Gastrocnemius medialis (tissue), 4 donors: ENCODE measurements at regions of chr18 and their contacts with region 1.

Region 1: DNA sequence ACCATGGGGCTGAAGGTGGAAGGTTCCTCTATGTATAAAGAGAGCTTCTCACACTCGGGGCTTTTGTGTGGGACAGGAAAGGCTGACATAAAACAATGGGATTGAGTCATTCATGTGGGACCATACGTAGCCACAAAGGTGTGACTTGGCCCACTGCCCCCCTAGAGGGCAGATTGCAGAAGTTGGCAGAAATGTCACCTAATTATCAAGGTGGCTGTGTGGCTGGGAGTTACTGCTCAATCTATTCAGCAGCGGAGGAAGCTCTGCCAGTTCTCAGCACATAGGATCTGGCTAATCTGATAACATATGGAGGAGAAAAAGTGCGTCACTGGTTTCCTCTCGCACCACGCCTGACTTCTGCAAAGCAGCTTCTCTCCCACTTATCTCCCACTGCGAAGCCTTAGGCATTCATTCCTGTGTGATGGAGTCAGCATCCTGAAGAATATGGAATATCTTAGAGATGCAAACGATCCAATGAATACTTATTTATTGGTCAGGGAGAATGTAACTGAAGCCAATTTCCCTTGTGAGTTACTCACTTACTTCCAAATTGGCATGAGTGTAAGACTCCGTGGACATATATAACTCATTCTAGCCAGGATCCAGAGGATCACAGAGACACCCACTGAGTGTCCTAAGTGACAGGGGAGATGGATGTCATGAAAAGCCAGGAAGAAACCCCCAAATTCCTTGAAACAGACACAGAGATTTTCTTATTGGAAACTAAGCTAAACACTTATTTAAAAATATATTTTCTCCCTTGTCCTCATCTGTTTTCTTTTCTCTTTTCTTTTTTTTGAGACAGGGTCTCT is 344.8 kb downstream of the TGIF1 start:
- DNase-seq: no peak
- ATAC-seq: peak; percentile 36
- H3K4me3 ChIP-seq: no peak overlapping the region
- H3K27ac ChIP-seq: no peak overlapping the region
- H3K4me1 ChIP-seq: no peaks in the 10 kb centered on the region
- H3K27me3 ChIP-seq: no peaks in the 10 kb centered on the region
- CTCF ChIP-seq: no peak
- POLR2A ChIP-seq: no peak

Region 2: DNA sequence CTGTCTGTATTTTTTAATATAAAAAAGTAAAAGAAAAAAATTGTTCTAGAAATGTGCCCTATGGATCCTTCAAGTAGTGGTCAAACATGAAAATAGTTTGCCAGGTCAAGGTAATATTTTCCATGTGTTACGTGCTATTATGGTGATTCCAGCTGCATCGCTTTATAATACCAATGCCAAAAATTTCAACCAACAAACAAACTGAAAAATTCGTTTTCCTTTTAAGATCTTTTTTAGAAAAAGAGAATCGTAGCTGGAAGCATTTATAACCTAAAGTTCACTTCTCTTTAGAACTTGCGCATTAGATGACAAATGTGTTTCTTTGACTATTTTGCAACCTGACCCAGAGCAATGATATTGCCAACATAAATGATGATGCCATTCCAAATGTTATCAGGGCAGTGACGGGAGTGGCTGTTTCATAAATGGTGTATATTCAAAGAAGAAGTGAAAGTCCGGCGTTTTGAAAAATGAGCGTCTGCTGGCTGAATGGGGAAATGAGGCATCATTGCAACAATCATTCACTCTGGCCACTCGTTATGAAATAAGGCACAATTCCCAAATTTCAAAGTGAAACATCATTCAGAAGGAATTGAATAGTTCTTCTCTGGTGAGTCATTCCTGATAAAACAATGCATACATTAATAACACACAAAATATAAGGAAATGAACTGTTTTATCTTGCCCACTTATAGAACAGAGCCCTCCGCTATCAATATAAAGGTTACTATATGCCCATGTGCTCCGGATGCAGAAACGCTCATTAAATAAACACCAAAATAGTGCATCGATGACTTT is 47.4 kb before region 1 on chr18:
- in situ Hi-C with region 1: no loop called
- intact Hi-C with region 1: no loop called
- DNase-seq: peak in 1 of 2 donors; percentile 17
- ATAC-seq: no peak
- H3K4me3 ChIP-seq: no peak overlapping the region
- H3K27ac ChIP-seq: no peak overlapping the region
- H3K4me1 ChIP-seq: no peaks in the 10 kb centered on the region
- H3K27me3 ChIP-seq: no peaks in the 10 kb centered on the region
- CTCF ChIP-seq: no peak
- POLR2A ChIP-seq: no peak

Region 3: DNA sequence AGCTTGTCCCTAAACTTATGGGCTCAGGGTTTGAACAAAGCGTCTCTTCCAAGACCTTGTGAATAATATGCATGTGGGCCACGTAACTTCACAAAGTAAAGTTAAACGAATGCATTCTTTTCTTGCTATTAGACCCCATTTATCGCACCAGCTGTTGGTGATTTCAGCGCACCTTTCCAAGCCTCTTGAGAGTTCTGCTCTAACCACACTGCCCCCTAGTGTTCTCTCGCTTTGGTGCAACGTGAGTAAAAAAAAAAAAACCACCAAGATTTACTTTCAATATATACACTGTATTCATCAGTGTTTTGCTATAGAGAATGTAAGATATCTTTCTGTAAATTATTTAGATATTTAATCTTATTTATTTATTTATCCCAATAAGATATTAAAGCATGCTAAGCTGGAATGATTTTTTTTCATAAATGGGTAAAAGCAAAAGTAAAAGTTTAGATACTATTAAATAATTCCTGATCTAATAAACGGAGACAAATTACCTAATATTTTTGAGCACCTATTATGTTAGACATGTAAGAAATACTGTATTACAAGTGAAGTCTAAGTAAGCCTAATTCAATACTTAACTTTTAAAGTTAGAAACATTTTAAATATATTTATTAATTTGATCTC is 200.8 kb after region 1 on chr18:
- in situ Hi-C with region 1: loop called in 1 of 4 experiments (anchors 25 kb)
- intact Hi-C with region 1: no loop called
- DNase-seq: no peak
- ATAC-seq: no peak
- H3K4me3 ChIP-seq: no peak overlapping the region
- H3K27ac ChIP-seq: no peak overlapping the region
- H3K4me1 ChIP-seq: no peaks in the 10 kb centered on the region
- H3K27me3 ChIP-seq: no peaks in the 10 kb centered on the region
- CTCF ChIP-seq: peak in 2 of 5 experiments; percentile 70
- POLR2A ChIP-seq: no peak

Region 4: GRCh38 chr18:4068552-4069158 is 273.9 kb after region 1 on chr18:
- in situ Hi-C with region 1: loop called in 1 of 4 experiments (anchors 25 kb)
- intact Hi-C with region 1: no loop called
- DNase-seq: no peak
- ATAC-seq: no peak
- H3K4me3 ChIP-seq: no peak overlapping the region
- H3K27ac ChIP-seq: no peak overlapping the region
- H3K4me1 ChIP-seq: no peaks in the 10 kb centered on the region
- H3K27me3 ChIP-seq: no peaks in the 10 kb centered on the region
- CTCF ChIP-seq: peak in 3 of 5 experiments; percentile 3 to 54 (median 46)
- POLR2A ChIP-seq: no peak